ENCODE measurements at regions of chr2 and their contacts with region 1.

Region 1: DNA sequence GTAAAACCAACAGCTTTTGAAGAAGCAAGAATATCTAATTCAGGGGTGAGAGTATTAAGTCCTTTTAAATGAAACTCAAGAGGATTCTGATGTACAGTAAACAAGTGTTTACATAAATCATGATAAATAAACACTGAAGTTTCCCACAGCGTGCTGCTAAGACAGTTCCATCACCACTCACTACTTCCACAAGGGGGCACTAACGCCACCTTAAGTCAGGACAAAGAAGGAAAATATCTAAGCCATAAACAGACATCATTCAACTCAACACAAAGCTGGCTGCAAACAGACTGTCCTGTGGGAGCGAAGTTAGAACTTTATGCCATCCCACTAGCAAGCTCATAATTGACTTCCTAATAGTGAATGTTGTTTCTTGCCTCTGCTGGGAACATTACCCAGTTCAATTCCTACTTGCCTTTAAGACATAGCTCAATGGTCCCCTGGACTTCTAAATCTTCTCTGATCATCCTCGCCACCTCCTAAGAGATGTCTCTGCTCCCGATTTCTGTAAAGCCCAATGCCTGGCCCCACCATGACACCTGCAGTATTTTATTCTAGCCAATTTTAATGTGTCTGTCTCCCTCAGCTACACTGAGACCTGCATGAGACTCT is 36.5 kb downstream of the MRPL44 start:
- DNase-seq: peak; percentile 73 to 79
- H3K4me3 ChIP-seq: no peak overlapping the region
- H3K4me3 Mint-ChIP-seq: no peak overlapping the region
- H3K27ac Mint-ChIP-seq: no peak overlapping the region
- H3K4me1 ChIP-seq: peaks cover 5% of the 10 kb centered on the region
- H3K4me1 Mint-ChIP-seq: peaks cover 10% of the 10 kb centered on the region
- H3K27me3 ChIP-seq: no peaks in the 10 kb centered on the region
- H3K27me3 Mint-ChIP-seq: no peaks in the 10 kb centered on the region
- CTCF ChIP-seq: peak; percentile 90 to 92

Region 2: DNA sequence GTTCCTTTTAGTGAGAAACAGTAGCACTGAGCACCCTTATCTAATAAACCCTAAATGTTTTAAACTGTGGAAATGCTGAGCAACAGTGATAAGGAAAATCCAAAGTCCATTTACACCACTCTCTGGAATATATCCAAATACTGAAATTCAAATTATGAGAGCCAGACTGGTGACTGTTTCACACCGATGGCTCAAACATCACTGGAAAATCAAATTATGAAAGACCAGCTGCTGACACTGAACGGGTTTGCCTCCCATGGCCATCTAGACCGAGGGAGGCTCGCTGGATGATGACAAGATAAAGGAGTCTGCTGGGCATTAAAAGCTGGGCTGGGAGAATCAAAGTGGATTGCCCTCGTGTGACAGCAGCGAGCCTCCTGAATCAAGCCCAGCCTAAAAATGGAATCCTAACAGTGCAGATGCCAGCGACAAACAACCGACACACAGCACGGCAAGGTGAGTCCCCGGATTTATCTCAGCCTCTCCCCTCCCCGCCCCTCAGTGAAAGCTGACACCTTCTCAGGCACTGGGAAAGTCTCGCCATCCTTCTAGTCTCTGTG is 15.1 kb after region 1 on chr2:
- CTCF ChIA-PET with region 1: interaction called, 14 read pairs
- POLR2A ChIA-PET with region 1: no interaction called
- intact Hi-C with region 1: no loop called
- DNase-seq: peak in 1 of 2 experiments; percentile 23
- H3K4me3 ChIP-seq: no peak overlapping the region
- H3K4me3 Mint-ChIP-seq: peak overlapping the region; percentile 17
- H3K27ac Mint-ChIP-seq: no peak overlapping the region
- H3K4me1 ChIP-seq: peaks cover 22% of the 10 kb centered on the region
- H3K4me1 Mint-ChIP-seq: peaks cover 28% of the 10 kb centered on the region
- H3K27me3 ChIP-seq: no peaks in the 10 kb centered on the region
- H3K27me3 Mint-ChIP-seq: no peaks in the 10 kb centered on the region
- CTCF ChIP-seq: no peak

Region 3: GRCh38 chr2:224062481-224063297 is 69.0 kb after region 1 on chr2:
- CTCF ChIA-PET with region 1: interaction called, 12 read pairs
- POLR2A ChIA-PET with region 1: no interaction called
- intact Hi-C with region 1: loop called (anchors 1 kb)
- DNase-seq: no peak
- H3K4me3 ChIP-seq: no peak overlapping the region
- H3K4me3 Mint-ChIP-seq: no peak overlapping the region
- H3K27ac Mint-ChIP-seq: no peak overlapping the region
- H3K4me1 ChIP-seq: no peaks in the 10 kb centered on the region
- H3K4me1 Mint-ChIP-seq: no peaks in the 10 kb centered on the region
- H3K27me3 ChIP-seq: no peaks in the 10 kb centered on the region
- H3K27me3 Mint-ChIP-seq: peaks cover 26% of the 10 kb centered on the region
- CTCF ChIP-seq: peak; percentile 26 to 34

Region 4: GRCh38 chr2:224284134-224284946 is 290.6 kb after region 1 on chr2:
- CTCF ChIA-PET with region 1: interaction called, 102 read pairs
- POLR2A ChIA-PET with region 1: no interaction called
- intact Hi-C with region 1: loop called (anchors 1 kb)
- DNase-seq: peak in 1 of 2 experiments; percentile 70
- H3K4me3 ChIP-seq: no peak overlapping the region
- H3K4me3 Mint-ChIP-seq: no peak overlapping the region
- H3K27ac Mint-ChIP-seq: no peak overlapping the region
- H3K4me1 ChIP-seq: no peaks in the 10 kb centered on the region
- H3K4me1 Mint-ChIP-seq: no peaks in the 10 kb centered on the region
- H3K27me3 ChIP-seq: no peaks in the 10 kb centered on the region
- H3K27me3 Mint-ChIP-seq: peaks cover 8% of the 10 kb centered on the region
- CTCF ChIP-seq: peak; percentile 34 to 95

Region 5: GRCh38 chr2:224449212-224450147 is 455.8 kb after region 1 on chr2:
- CTCF ChIA-PET with region 1: no interaction called
- POLR2A ChIA-PET with region 1: no interaction called
- intact Hi-C with region 1: loop called (anchors 5 kb)
- DNase-seq: peak in 1 of 2 experiments; percentile 35
- H3K4me3 ChIP-seq: no peak overlapping the region
- H3K4me3 Mint-ChIP-seq: no peak overlapping the region
- H3K27ac Mint-ChIP-seq: no peak overlapping the region
- H3K4me1 ChIP-seq: no peaks in the 10 kb centered on the region
- H3K4me1 Mint-ChIP-seq: no peaks in the 10 kb centered on the region
- H3K27me3 ChIP-seq: no peaks in the 10 kb centered on the region
- H3K27me3 Mint-ChIP-seq: no peaks in the 10 kb centered on the region
- CTCF ChIP-seq: peak; percentile 82 to 85

Measured in Caco-2 (cell line).